ENCODE measurements at regions of chr11 and their contacts with region 1.

Region 1: DNA sequence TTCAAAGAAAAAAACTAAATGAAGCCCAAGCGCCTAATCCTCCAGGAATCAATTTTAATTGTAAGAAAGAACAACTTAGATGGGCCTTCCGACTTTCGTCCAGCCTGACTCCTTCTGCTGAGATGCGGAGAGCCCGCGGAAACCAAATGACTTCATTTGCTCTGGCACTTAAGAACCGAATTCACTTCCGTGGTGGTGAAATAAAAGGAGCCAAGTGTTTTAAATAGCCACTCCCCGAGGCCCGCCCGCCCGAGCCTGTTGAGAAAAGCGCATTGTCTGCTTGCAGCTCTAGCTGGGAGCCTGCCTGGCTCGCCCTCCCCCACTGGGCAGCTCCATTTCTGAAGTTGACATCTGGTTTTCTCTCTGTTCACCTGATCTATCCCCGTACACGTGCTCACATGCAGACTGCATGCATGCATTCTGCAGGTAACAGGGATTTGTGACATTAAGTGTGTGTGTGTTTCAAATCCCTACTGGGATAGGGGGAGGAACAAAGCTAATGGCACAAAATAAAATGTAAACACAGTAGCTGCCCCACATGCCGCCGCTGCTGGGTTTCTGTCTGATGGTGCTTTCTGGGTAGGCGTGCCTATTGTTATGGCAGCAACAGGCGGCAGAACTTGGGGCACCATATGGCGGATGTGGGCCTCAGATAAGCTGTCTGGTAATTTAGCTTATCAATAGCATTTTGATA is 6.2 kb downstream of the TEAD1 start:
- DNase-seq: peak; percentile 75
- H3K4me3 ChIP-seq: peak overlapping the region; percentile 25 to 73
- H3K27ac ChIP-seq: peak overlapping the region; percentile 90 to 95
- H3K4me1 ChIP-seq: peaks cover 57 to 60% of the 10 kb centered on the region in 2 experiments
- H3K27me3 ChIP-seq: no peaks in the 10 kb centered on the region
- CTCF ChIP-seq: no peak
- EP300 ChIP-seq: peak; percentile 53 to 81; a peak in 3 of 4 replicates
- RAD21 ChIP-seq: no peak

Region 2: GRCh38 chr11:12079726-12080556 is 600.5 kb before region 1 on chr11:
- CTCF ChIA-PET with region 1: no interaction called
- POLR2A ChIA-PET with region 1: no interaction called
- DNase-seq: no peak
- H3K4me3 ChIP-seq: no peak overlapping the region
- H3K27ac ChIP-seq: peak overlapping the region; percentile 72 to 100
- H3K4me1 ChIP-seq: peaks cover 0 to 22% of the 10 kb centered on the region in 2 experiments; a peak in 2 of 4 replicates
- H3K27me3 ChIP-seq: no peaks in the 10 kb centered on the region
- CTCF ChIP-seq: no peak
- EP300 ChIP-seq: peak in 1 of 2 experiments; percentile 89; a peak in 2 of 4 replicates
- RAD21 ChIP-seq: no peak

Region 3: DNA sequence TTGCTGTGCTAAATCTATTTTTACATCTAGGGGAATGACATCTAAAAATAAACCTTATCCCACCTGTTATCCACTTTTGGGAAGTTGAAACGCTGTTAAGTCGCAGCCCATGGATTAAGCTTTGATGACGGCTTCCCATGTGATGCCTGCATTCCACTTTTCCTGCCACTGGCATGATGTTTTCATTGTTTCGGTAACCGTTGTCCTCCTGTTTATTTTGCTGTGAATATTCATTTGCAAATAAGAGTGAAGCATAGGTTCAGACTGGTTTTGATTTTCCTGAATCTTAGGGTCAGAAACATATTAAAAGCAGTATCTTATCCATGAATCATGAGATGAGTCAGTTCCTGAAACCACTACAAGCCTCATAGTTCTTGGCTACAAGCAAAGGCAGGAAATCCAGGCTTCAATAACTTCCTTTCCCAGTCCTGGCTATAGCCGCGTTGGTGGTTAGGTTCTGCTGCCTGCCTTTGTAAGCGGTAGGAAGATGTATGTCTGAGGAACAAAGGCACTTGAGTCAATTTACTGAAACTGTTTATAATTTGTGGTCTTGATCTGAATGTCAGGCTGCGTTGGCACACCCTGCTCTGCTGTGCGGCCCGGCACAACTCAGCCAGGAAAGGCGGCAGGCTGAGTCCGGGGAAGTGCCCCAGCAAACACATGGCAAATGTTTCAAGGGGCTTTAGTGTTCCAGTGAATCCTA is 13.2 kb after region 1 on chr11:
- CTCF ChIA-PET with region 1: interaction called, 8 read pairs
- POLR2A ChIA-PET with region 1: interaction called, 14 read pairs
- DNase-seq: peak; percentile 34
- H3K4me3 ChIP-seq: peak overlapping the region; percentile 25 to 50; a peak in 3 of 4 replicates
- H3K27ac ChIP-seq: peak overlapping the region; percentile 96 to 100
- H3K4me1 ChIP-seq: peaks cover 77 to 79% of the 10 kb centered on the region in 2 experiments
- H3K27me3 ChIP-seq: no peaks in the 10 kb centered on the region
- CTCF ChIP-seq: no peak
- EP300 ChIP-seq: peak; percentile 54 to 90
- RAD21 ChIP-seq: no peak

Region 4: DNA sequence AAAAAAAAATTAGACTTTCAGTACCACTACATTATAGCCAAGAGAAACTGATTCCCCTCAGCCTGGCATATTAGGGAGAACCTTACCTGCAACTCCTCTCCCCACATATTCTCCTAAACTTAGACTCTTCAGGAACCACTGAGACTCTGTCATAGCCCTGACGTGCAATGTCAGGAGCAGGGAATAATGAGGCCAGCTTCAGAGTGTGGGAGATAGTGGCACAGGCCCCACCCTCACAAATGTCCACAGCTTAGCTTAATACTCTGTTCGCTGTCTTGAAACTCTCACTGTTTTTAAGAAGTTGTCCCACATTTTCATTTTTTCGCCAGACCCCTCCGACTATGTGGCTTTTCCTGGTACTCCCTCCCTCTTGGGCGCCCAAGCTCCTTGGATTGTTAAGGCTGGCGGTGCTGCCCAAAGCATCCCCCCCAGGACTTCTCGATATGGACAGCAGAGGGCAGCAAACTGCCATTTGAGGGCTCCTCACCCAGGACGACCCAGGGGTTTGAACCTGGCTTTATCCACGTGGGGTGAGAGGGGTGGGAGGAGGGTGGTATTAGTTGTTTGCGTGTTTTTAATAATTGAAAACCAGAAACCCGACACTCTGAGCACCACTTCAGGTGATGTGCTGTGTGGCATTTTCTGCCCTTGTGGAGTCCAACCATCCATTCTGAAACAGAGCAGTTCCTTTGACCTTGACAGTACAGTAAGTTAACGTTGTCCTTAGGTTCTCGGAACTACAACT is 283.6 kb after region 1 on chr11:
- CTCF ChIA-PET with region 1: no interaction called
- POLR2A ChIA-PET with region 1: no interaction called
- DNase-seq: peak; percentile 88
- H3K4me3 ChIP-seq: no peak overlapping the region
- H3K27ac ChIP-seq: no peak overlapping the region
- H3K4me1 ChIP-seq: no peaks in the 10 kb centered on the region; a peak in 1 of 4 replicates
- H3K27me3 ChIP-seq: no peaks in the 10 kb centered on the region
- CTCF ChIP-seq: peak; percentile 93
- EP300 ChIP-seq: no peak
- RAD21 ChIP-seq: peak; percentile 91